ENCODE measurements at regions of chr4 and their contacts with region 1.

Region 1: GRCh38 chr4:30714408-30715027 is 5.7 kb upstream of the PCDH7 start:
- DNase-seq: peak; percentile 73
- ATAC-seq: peak; percentile 75
- H3K4me3 ChIP-seq: no peak overlapping the region
- H3K27ac ChIP-seq: peak overlapping the region; percentile 86
- H3K4me1 ChIP-seq: peaks cover 25 to 36% of the 10 kb centered on the region in 2 experiments
- H3K27me3 ChIP-seq: no peaks in the 10 kb centered on the region
- CTCF ChIP-seq: peak; percentile 32 to 82 (median 81); a peak in 5 of 6 replicates
- POLR2A ChIP-seq: no peak
- RAD21 ChIP-seq: peak; percentile 72

Region 2: DNA sequence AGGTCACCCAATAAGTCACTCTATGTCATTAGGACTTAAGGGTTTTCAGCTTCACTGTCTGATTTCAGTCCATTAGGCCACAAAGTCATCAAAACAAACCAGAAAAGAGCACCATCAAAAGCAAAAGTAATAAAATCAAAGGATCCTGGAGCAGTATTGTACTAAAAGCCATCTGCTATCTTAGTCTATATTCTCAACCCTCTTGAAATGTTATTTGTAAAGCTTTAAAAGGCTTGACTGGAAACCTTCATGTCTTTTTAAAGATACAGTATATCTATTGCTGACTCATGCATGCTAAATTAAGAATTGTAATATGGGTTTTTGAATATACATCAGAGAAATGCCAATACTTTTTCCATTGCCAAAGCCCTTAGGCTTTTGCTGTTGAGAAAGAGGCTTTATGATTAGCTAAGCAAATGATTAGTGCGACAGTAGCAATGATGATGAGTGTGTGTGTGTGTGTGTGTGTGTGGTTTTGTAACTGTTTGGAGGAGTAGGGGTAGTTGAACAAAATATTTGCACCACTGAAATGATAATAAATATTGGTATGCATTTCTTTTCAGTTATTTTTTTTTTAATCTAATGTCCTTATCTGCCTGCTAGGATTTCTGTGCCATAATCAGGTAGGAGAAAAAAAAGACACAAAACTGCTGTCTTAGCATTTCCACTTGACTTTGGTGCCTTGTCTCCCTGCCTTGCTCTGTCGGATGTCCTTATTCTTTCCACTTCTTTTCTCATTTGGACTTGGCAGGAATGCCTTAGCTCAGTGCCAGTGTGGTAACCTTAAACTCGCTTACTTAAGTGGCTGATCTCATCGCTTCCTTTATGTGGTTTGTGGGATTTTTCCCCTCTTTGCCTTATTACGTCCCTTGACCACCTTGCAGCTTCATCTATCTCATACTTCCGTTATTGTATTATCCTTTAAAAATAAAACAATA is 125.3 kb after region 1 on chr4:
- CTCF ChIA-PET with region 1: no interaction called
- POLR2A ChIA-PET with region 1: interaction called, 3 read pairs
- RAD21 ChIA-PET with region 1: no interaction called
- intact Hi-C with region 1: loop called (anchors 5 kb)
- DNase-seq: peak; percentile 97
- ATAC-seq: peak; percentile 77
- H3K4me3 ChIP-seq: peak overlapping the region in 1 of 2 experiments; percentile 18; a peak in 1 of 4 replicates
- H3K27ac ChIP-seq: peak overlapping the region; percentile 100
- H3K4me1 ChIP-seq: peaks cover 83 to 99% of the 10 kb centered on the region in 2 experiments
- H3K27me3 ChIP-seq: no peaks in the 10 kb centered on the region
- CTCF ChIP-seq: no peak
- POLR2A ChIP-seq: no peak
- RAD21 ChIP-seq: peak; percentile 22; the same call in 1 of the 2 replicates

Region 3: DNA sequence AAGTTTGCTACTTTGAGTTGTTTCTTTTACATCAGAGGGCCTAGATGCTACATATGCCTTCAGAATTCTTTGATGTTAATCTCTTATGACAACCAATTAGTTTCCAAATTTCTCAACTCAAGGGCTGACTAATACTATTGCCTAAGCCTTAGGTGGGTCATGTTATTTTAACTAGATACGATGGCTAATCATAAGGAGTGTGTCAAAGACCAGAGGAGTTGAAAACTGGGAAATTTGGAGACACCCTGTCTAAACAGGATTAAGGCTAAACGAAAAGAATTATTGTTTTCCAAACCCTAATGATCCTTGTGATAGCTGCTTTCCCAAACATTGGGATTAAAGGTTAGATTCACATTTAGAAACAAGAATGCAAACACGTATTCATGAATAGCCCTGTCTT is 234.1 kb after region 1 on chr4:
- CTCF ChIA-PET with region 1: no interaction called
- POLR2A ChIA-PET with region 1: interaction called, 3 read pairs
- RAD21 ChIA-PET with region 1: no interaction called
- intact Hi-C with region 1: loop called (anchors 5 kb)
- DNase-seq: peak; percentile 90
- ATAC-seq: peak; percentile 58
- H3K4me3 ChIP-seq: no peak overlapping the region
- H3K27ac ChIP-seq: peak overlapping the region; percentile 94
- H3K4me1 ChIP-seq: peaks cover 77 to 99% of the 10 kb centered on the region in 2 experiments
- H3K27me3 ChIP-seq: no peaks in the 10 kb centered on the region
- CTCF ChIP-seq: no peak
- POLR2A ChIP-seq: no peak
- RAD21 ChIP-seq: peak; percentile 47

Region 4: DNA sequence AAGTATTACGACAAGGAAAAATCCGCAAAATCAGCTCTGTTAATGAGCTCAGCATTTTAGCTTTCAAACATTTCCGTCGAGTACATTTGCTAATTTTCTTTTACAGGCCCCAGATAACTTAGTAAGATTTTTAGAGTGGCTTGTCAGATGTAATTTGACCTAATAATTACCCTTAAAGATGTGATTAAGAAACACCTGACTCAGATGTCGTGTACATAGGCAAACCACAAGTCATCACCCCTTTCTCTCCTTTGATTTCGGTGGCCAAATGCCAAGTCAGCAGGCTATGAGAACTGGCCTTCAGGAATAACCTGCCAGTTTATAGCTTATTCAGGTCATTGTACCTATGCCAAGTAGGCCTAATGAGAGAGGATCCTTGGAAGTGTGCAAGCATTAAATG is 375.3 kb after region 1 on chr4:
- CTCF ChIA-PET with region 1: no interaction called
- POLR2A ChIA-PET with region 1: no interaction called
- RAD21 ChIA-PET with region 1: no interaction called
- intact Hi-C with region 1: loop called (anchors 2 kb)
- DNase-seq: peak; percentile 97
- ATAC-seq: peak; percentile 71
- H3K4me3 ChIP-seq: peak overlapping the region in 1 of 2 experiments; percentile 19; a peak in 1 of 4 replicates
- H3K27ac ChIP-seq: peak overlapping the region; percentile 96; the same call in 1 of the 2 replicates
- H3K4me1 ChIP-seq: peaks cover 72 to 77% of the 10 kb centered on the region in 2 experiments
- H3K27me3 ChIP-seq: no peaks in the 10 kb centered on the region
- CTCF ChIP-seq: no peak
- POLR2A ChIP-seq: no peak
- RAD21 ChIP-seq: peak; percentile 33

Region 5: GRCh38 chr4:31674313-31674947 is 959.9 kb after region 1 on chr4:
- CTCF ChIA-PET with region 1: no interaction called
- POLR2A ChIA-PET with region 1: no interaction called
- RAD21 ChIA-PET with region 1: no interaction called
- intact Hi-C with region 1: loop called (anchors 10 kb)
- DNase-seq: peak; percentile 23
- ATAC-seq: peak; percentile 87
- H3K4me3 ChIP-seq: no peak overlapping the region
- H3K27ac ChIP-seq: no peak overlapping the region
- H3K4me1 ChIP-seq: no peaks in the 10 kb centered on the region
- H3K27me3 ChIP-seq: no peaks in the 10 kb centered on the region
- CTCF ChIP-seq: peak in 2 of 3 experiments; percentile 60 to 64; a peak in 4 of 6 replicates
- POLR2A ChIP-seq: no peak
- RAD21 ChIP-seq: peak; percentile 62